ENCODE measurements at regions of chr3 and their contacts with region 1.

Region 1: GRCh38 chr3:29427266-29428103 is 146.6 kb downstream of the RBMS3 start:
- DNase-seq: peak; percentile 15 to 29
- ATAC-seq: peak; percentile 72 to 93 (median 84)
- H3K4me3 ChIP-seq: no peak overlapping the region
- H3K27ac ChIP-seq: peak overlapping the region in 6 of 10 donors; percentile 6 to 28 (median 19)
- H3K4me1 ChIP-seq: peaks cover 2 to 61% (median 32%) of the 10 kb centered on the region in 9 donors
- H3K27me3 ChIP-seq: no peaks in the 10 kb centered on the region
- CTCF ChIP-seq: no peak

Region 2: DNA sequence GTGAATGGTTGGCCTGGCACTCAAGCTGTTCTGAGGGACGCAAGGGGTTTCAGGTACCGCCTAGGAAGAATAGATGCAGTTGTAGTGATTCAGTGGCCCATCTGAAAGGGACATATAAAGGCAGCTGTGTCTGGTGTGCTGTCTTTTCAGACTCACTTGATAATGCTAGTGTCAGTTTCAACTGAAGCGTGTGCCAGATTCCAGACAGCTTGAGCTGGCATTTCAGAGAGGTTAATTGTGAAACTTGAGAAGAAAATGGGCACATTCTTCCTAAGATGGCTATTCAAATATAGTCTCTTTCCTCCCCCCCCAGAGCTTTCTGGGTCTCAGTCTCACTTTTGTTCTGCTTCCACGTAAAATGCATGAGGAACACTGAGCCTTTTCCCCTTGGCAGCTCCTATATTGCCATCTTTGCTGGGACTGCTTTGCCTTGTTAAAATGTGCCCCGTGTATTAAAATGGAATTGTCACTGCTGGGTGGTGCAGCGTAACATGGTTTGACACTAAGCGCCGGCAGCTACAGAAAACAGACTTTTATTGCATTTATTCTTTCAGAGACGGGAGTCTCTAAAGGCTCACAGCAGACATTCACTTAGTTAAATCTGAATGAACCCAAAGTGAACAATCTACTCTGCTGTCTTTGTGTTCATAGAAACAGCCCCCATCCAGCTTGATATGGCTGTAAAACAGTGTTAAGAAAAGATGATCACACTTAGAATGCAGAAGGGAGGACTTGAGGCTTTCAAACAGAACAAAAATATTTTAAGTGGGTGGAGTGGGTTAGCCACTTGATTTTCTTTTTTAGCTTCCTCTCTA is 332.1 kb after region 1 on chr3:
- intact Hi-C with region 1: loop called in 1 of 10 experiments (anchors 10 kb)
- DNase-seq: peak in 1 of 2 donors; percentile 9
- ATAC-seq: peak in 7 of 8 donors; percentile 44 to 75 (median 57)
- H3K4me3 ChIP-seq: peak overlapping the region in 2 of 10 donors; percentile 9 to 11
- H3K27ac ChIP-seq: peak overlapping the region; percentile 4 to 88 (median 78)
- H3K4me1 ChIP-seq: peaks cover 11 to 67% (median 57%) of the 10 kb centered on the region in 9 donors
- H3K27me3 ChIP-seq: no peaks in the 10 kb centered on the region
- CTCF ChIP-seq: no peak